ENCODE measurements at regions of chr11 and their contacts with region 1.

Region 1: GRCh38 chr11:73384872-73385689 is 8.9 kb downstream of the RELT start:
- DNase-seq: no peak
- H3K4me3 ChIP-seq: no peak overlapping the region
- H3K27ac ChIP-seq: no peak overlapping the region
- H3K4me1 ChIP-seq: 0 out of 2 replicates have a peak, but pooled peaks cover 14% of the 10 kb centered on the region
- H3K27me3 ChIP-seq: no peaks in the 10 kb centered on the region
- CTCF ChIP-seq: no peak

Region 2: DNA sequence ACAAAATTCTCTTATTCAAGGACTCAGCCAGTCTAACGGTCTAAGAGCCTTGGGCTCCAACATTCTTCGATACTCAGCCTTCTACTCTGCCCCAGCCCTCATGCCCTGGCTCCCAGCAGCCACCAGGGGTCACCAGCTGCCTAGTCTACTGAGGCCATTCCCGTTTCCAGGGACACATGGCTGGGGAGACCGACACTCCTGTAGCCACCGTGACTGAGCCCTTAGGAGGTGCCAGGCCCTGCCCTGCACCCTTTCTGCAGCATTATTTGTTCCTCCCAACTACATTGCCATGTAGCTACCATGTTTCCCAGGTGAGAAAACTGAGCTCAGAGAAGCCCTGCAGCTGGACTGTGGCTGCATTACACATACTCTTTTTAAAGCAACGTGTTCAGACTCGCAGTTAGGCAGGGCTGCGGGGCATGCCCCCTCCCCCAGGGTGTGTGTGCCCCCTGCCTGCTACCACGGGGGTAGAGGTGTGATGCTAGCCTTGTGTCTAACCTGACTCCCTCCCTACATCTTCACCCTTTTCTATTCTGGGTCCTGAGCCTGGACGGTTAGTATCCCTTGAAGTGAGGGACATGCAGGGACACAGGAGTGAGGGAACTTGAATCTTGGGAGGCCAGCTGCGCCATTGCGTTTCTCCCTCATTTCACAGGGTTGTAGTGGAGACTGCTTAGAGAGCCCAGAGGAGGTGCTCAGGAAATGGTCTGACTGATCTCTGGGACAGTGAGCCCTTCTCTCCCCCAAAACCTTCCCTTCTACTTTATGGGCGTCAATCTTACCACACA is 553.4 kb before region 1 on chr11:
- CTCF ChIA-PET with region 1: no interaction called
- POLR2A ChIA-PET with region 1: no interaction called
- intact Hi-C with region 1: loop called (anchors 5 kb)
- DNase-seq: peak; percentile 61 to 85
- H3K4me3 ChIP-seq: no peak overlapping the region
- H3K27ac ChIP-seq: no peak overlapping the region
- H3K4me1 ChIP-seq: 0 out of 2 replicates have a peak, but pooled peaks cover 4% of the 10 kb centered on the region
- H3K27me3 ChIP-seq: no peaks in the 10 kb centered on the region
- CTCF ChIP-seq: peak; percentile 97

Region 3: GRCh38 chr11:73288873-73289707 is 96.0 kb before region 1 on chr11:
- CTCF ChIA-PET with region 1: no interaction called
- POLR2A ChIA-PET with region 1: no interaction called
- intact Hi-C with region 1: no loop called
- DNase-seq: peak; percentile 86 to 98
- H3K4me3 ChIP-seq: peak overlapping the region; percentile 32; the same call in 1 of the 2 replicates
- H3K27ac ChIP-seq: peak overlapping the region; percentile 88
- H3K4me1 ChIP-seq: peaks cover 35% of the 10 kb centered on the region
- H3K27me3 ChIP-seq: no peaks in the 10 kb centered on the region
- CTCF ChIP-seq: peak; percentile 99

Region 4: GRCh38 chr11:73360336-73361013 is 24.6 kb before region 1 on chr11:
- CTCF ChIA-PET with region 1: no interaction called
- POLR2A ChIA-PET with region 1: no interaction called
- intact Hi-C with region 1: no loop called
- DNase-seq: peak in 1 of 2 experiments; percentile 32
- H3K4me3 ChIP-seq: no peak overlapping the region
- H3K27ac ChIP-seq: no peak overlapping the region
- H3K4me1 ChIP-seq: no peaks in the 10 kb centered on the region
- H3K27me3 ChIP-seq: no peaks in the 10 kb centered on the region
- CTCF ChIP-seq: peak; percentile 71

Region 5: DNA sequence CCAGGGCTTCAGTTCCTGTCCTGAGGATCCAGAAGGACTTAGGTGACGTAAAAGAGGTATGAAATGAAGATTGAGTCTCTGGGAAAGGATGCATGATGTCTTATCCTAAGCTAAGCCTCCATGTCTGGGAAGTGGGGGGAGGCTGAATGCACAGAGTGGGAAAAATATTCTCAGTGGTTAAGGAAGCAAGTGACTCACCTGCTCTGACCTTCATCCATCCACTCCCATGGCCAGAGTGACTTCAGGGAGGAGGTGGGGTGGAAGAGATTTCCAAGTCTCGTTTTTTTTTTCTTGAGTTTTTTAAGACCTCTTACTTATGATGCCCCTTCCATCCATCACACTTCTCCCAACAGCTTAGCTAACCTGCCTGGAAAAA is 1174.8 kb after region 1 on chr11:
- CTCF ChIA-PET with region 1: interaction called, 10 read pairs
- POLR2A ChIA-PET with region 1: no interaction called
- intact Hi-C with region 1: no loop called
- DNase-seq: no peak
- H3K4me3 ChIP-seq: no peak overlapping the region
- H3K27ac ChIP-seq: 0 out of 2 replicates have a peak overlapping the region, but pooled peaks have one; percentile 18
- H3K4me1 ChIP-seq: peaks cover 12% of the 10 kb centered on the region
- H3K27me3 ChIP-seq: no peaks in the 10 kb centered on the region
- CTCF ChIP-seq: no peak

Measured in PC-9 (cell line).